Activated B cell treated with CpG ODN at 0.5 μM for 24 hours (primary cell): ENCODE measurements at regions of chr9 and their contacts with region 1.

Region 1: DNA sequence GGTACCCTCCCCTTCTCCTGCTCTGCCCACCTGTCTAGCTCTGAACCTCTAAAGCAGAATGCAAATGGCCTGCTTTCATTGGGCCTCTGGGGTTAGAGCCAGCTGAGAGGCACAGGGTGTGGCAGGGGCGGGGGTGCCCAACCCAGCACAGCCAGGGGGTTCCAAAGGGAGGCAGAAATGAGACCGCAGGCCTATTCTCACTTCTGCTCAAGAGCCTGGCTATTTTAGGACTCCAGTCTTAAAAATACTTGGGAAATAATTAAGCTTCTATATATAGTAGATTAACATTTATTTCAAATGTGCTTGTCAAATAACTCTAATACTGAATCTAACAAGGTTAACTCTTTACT is 5.7 kb downstream of the QSOX2 start:
- DNase-seq: peak; percentile 64
- ATAC-seq: peak; percentile 78
- H3K4me3 Mint-ChIP-seq: peak overlapping the region; percentile 76
- H3K27ac Mint-ChIP-seq: peak overlapping the region; percentile 79
- H3K4me1 Mint-ChIP-seq: peaks cover 90% of the 10 kb centered on the region
- H3K27me3 Mint-ChIP-seq: no peaks in the 10 kb centered on the region
- CTCF ChIP-seq: no peak

Region 2: GRCh38 chr9:136198605-136199083 is 41.3 kb before region 1 on chr9:
- CTCF ChIA-PET with region 1: interaction called, 4 read pairs
- POLR2A ChIA-PET with region 1: no interaction called
- intact Hi-C with region 1: loop called (anchors 5 kb)
- DNase-seq: no peak
- ATAC-seq: no peak
- H3K4me3 Mint-ChIP-seq: no peak overlapping the region
- H3K27ac Mint-ChIP-seq: no peak overlapping the region
- H3K4me1 Mint-ChIP-seq: peaks cover 20% of the 10 kb centered on the region
- H3K27me3 Mint-ChIP-seq: peaks cover 32% of the 10 kb centered on the region
- CTCF ChIP-seq: no peak

Region 3: GRCh38 chr9:136275655-136276429 is 35.9 kb after region 1 on chr9:
- CTCF ChIA-PET with region 1: no interaction called
- POLR2A ChIA-PET with region 1: no interaction called
- intact Hi-C with region 1: no loop called
- DNase-seq: no peak
- ATAC-seq: no peak
- H3K4me3 Mint-ChIP-seq: no peak overlapping the region
- H3K27ac Mint-ChIP-seq: no peak overlapping the region
- H3K4me1 Mint-ChIP-seq: no peaks in the 10 kb centered on the region
- H3K27me3 Mint-ChIP-seq: peaks cover 3% of the 10 kb centered on the region
- CTCF ChIP-seq: no peak